CD14-positive monocyte (primary cell): ENCODE measurements at regions of chr5 and their contacts with region 1.

Region 1: GRCh38 chr5:80672140-80672736 is 17.5 kb upstream of the DHFR start:
- DNase-seq: peak; percentile 44 to 61 (median 56)
- H3K4me3 ChIP-seq: no peak overlapping the region
- H3K4me3 Mint-ChIP-seq: no peak overlapping the region
- H3K27ac ChIP-seq: no peak overlapping the region
- H3K27ac Mint-ChIP-seq: no peak overlapping the region
- H3K4me1 ChIP-seq: no peaks in the 10 kb centered on the region
- H3K4me1 Mint-ChIP-seq: peaks cover 4% of the 10 kb centered on the region
- H3K27me3 ChIP-seq: no peaks in the 10 kb centered on the region
- H3K27me3 Mint-ChIP-seq: no peaks in the 10 kb centered on the region
- CTCF ChIP-seq: peak; percentile 87

Region 2: GRCh38 chr5:80481019-80481893 is 191.0 kb before region 1 on chr5:
- intact Hi-C with region 1: loop called (anchors 5 to 10 kb)
- DNase-seq: peak; percentile 38 to 62 (median 48)
- H3K4me3 ChIP-seq: no peak overlapping the region
- H3K4me3 Mint-ChIP-seq: no peak overlapping the region
- H3K27ac ChIP-seq: peak overlapping the region in 1 of 2 donors; percentile 27
- H3K27ac Mint-ChIP-seq: peak overlapping the region in 2 of 7 donors; percentile 1 to 44
- H3K4me1 ChIP-seq: no peaks in the 10 kb centered on the region
- H3K4me1 Mint-ChIP-seq: peaks cover 8% of the 10 kb centered on the region
- H3K27me3 ChIP-seq: no peaks in the 10 kb centered on the region
- H3K27me3 Mint-ChIP-seq: no peaks in the 10 kb centered on the region
- CTCF ChIP-seq: peak; percentile 79

Region 3: GRCh38 chr5:80487829-80488721 is 184.2 kb before region 1 on chr5 and contains the start of gene FAM151B:
- intact Hi-C with region 1: loop called (anchors 5 to 10 kb)
- DNase-seq: peak; percentile 75 to 80 (median 79)
- H3K4me3 ChIP-seq: peak within 1 kb of the TSS; percentile 56 to 98 (median 72)
- H3K4me3 Mint-ChIP-seq: peak within 1 kb of the TSS; percentile 97 to 98
- H3K27ac ChIP-seq: peak within 1 kb of the TSS; percentile 25 to 87
- H3K27ac Mint-ChIP-seq: peak within 1 kb of the TSS; percentile 83 to 95 (median 90)
- H3K4me1 ChIP-seq: peaks cover 14 to 28% of the 10 kb centered on the region in 2 donors
- H3K4me1 Mint-ChIP-seq: peaks cover 35% of the 10 kb centered on the region
- H3K27me3 ChIP-seq: no peaks in the 10 kb centered on the region
- H3K27me3 Mint-ChIP-seq: no peaks in the 10 kb centered on the region
- CTCF ChIP-seq: no peak
- polyA plus RNA-seq, gene FAM151B: 3.2 to 10.2 (median 4.5) TPM

Region 4: GRCh38 chr5:80960531-80961375 is 288.5 kb after region 1 on chr5:
- intact Hi-C with region 1: no loop called
- DNase-seq: no peak
- H3K4me3 ChIP-seq: no peak overlapping the region
- H3K4me3 Mint-ChIP-seq: peak overlapping the region; percentile 59 to 77
- H3K27ac ChIP-seq: no peak overlapping the region
- H3K27ac Mint-ChIP-seq: peak overlapping the region in 1 of 7 donors; percentile 1
- H3K4me1 ChIP-seq: peaks cover 0 to 7% of the 10 kb centered on the region in 2 donors
- H3K4me1 Mint-ChIP-seq: peaks cover 8% of the 10 kb centered on the region
- H3K27me3 ChIP-seq: peaks cover 82 to 91% of the 10 kb centered on the region in 2 donors
- H3K27me3 Mint-ChIP-seq: peaks cover 58 to 78% (median 64%) of the 10 kb centered on the region in 3 donors
- CTCF ChIP-seq: no peak

Region 5: GRCh38 chr5:81006947-81007636 is 334.9 kb after region 1 on chr5:
- intact Hi-C with region 1: no loop called
- DNase-seq: no peak
- H3K4me3 ChIP-seq: no peak overlapping the region
- H3K4me3 Mint-ChIP-seq: no peak overlapping the region
- H3K27ac ChIP-seq: no peak overlapping the region
- H3K27ac Mint-ChIP-seq: no peak overlapping the region
- H3K4me1 ChIP-seq: no peaks in the 10 kb centered on the region
- H3K4me1 Mint-ChIP-seq: peaks cover 1% of the 10 kb centered on the region
- H3K27me3 ChIP-seq: no peaks in the 10 kb centered on the region
- H3K27me3 Mint-ChIP-seq: peaks cover 4 to 13% (median 10%) of the 10 kb centered on the region in 3 donors
- CTCF ChIP-seq: no peak